H1 (cell line): ENCODE measurements at regions of chr12 and their contacts with region 1.

Region 1: GRCh38 chr12:123232807-123233543 is at the starts of genes MPHOSPH9 and MTRFR:
- DNase-seq: peak; percentile 96 to 98
- H3K4me3 ChIP-seq: peak within 1 kb of the TSS; percentile 59 to 94 (median 89)
- H3K27ac ChIP-seq: peak within 1 kb of the TSS; percentile 47
- H3K4me1 ChIP-seq: peaks cover 0 to 4% (median 2%) of the 10 kb centered on the region in 4 experiments; a peak in 3 of 7 replicates
- H3K27me3 ChIP-seq: no peaks in the 10 kb centered on the region
- CTCF ChIP-seq: no peak
- EP300 ChIP-seq: no peak
- POLR2A ChIP-seq: peak; percentile 84 to 94
- RAD21 ChIP-seq: no peak
- total RNA-seq, gene MPHOSPH9: 47.7 and 48.8 TPM in 2 replicates
- total RNA-seq, gene MTRFR: 12.0 and 12.9 TPM in 2 replicates

Region 2: GRCh38 chr12:122974274-122974891 is 258.6 kb before region 1 on chr12:
- CTCF ChIA-PET with region 1: interaction called, 8 read pairs
- POLR2A ChIA-PET with region 1: interaction called, 21 read pairs
- DNase-seq: peak; percentile 93 to 97
- H3K4me3 ChIP-seq: peak overlapping the region; percentile 85 to 96 (median 89)
- H3K27ac ChIP-seq: peak overlapping the region; percentile 72
- H3K4me1 ChIP-seq: peaks cover 0 to 8% (median 6%) of the 10 kb centered on the region in 4 experiments; a peak in 6 of 7 replicates
- H3K27me3 ChIP-seq: no peaks in the 10 kb centered on the region
- CTCF ChIP-seq: no peak
- EP300 ChIP-seq: no peak
- POLR2A ChIP-seq: peak in 1 of 2 experiments; percentile 42; a peak in 1 of 3 replicates
- RAD21 ChIP-seq: no peak

Region 3: DNA sequence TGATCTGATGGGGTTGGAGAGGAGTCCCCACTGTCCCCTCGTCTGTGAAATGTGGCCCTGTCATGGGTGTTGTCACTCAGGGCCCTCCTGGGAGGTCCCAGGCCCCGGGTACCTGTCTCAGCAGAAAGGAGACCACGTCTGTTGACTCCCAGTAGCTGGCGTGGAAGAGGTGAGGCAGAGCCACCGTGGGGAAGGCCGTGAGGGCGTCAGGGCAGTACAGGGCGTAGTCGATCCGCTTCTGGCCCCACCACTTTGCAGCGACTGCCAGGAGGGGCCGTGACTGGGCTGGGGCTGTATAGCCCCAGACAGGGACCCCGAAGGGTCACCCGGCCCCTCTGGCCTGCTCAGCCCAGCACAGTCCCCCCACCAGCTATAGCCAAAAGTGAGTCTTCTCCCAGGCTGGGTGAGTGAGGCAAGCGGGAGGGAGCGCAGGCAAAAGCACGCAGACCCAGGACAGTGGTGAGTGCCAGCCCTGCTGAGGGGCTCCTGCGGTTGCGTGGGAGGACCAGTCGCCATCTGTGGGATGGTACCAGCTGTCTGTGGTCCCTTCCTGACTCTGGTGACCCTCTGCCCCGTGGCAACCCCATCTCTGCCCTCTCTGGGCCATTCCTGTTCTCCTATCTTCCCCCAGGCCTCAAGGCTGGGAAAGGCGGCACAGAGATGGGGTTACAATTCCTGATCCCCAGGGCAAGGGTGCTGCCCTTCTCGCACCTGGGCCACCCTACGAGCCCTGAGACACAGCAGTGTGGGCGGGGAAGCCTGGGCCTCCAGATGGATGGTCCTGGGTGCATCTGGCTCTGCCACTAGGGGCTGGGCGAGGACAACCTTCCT is 244.1 kb before region 1 on chr12:
- CTCF ChIA-PET with region 1: interaction called, 10 read pairs
- POLR2A ChIA-PET with region 1: interaction called, 7 read pairs
- DNase-seq: no peak
- H3K4me3 ChIP-seq: no peak overlapping the region
- H3K27ac ChIP-seq: no peak overlapping the region
- H3K4me1 ChIP-seq: no peaks in the 10 kb centered on the region; a peak in 5 of 7 replicates
- H3K27me3 ChIP-seq: no peaks in the 10 kb centered on the region
- CTCF ChIP-seq: peak in 2 of 3 experiments; percentile 21 to 36; a peak in 2 of 4 replicates
- EP300 ChIP-seq: no peak
- POLR2A ChIP-seq: no peak
- RAD21 ChIP-seq: peak; percentile 14 to 36; a peak in 3 of 4 replicates

Region 4: DNA sequence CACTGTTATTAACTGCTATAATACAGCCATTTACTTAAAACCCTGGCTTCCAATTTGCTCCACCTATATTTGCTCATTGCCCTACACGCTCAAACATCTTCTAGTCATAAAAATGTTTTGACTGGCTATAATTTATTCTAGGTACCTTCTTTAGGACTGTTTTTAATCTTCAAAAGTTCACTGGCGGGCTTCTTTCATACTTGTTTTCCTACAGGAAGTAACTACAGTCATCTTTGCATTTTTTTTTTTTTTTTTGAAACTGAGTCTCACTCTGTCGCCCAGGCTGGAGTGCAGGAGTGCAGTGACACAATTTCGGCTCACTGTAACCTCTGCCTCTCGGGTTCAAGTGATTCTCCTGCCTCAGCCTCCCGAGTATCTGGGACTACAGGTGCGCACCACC is 32.6 kb before region 1 on chr12:
- CTCF ChIA-PET with region 1: interaction called, 11 read pairs
- POLR2A ChIA-PET with region 1: interaction called, 3 read pairs
- DNase-seq: no peak
- H3K4me3 ChIP-seq: no peak overlapping the region
- H3K27ac ChIP-seq: no peak overlapping the region
- H3K4me1 ChIP-seq: no peaks in the 10 kb centered on the region
- H3K27me3 ChIP-seq: no peaks in the 10 kb centered on the region
- CTCF ChIP-seq: no peak
- EP300 ChIP-seq: no peak
- POLR2A ChIP-seq: no peak
- RAD21 ChIP-seq: no peak

Region 5: GRCh38 chr12:123258593-123258992 is 25.6 kb after region 1 on chr12:
- CTCF ChIA-PET with region 1: interaction called, 11 read pairs
- POLR2A ChIA-PET with region 1: interaction called, 5 read pairs
- DNase-seq: no peak
- H3K4me3 ChIP-seq: no peak overlapping the region
- H3K27ac ChIP-seq: no peak overlapping the region
- H3K4me1 ChIP-seq: peaks cover 0 to 7% (median 0%) of the 10 kb centered on the region in 4 experiments; a peak in 2 of 7 replicates
- H3K27me3 ChIP-seq: no peaks in the 10 kb centered on the region
- CTCF ChIP-seq: no peak
- EP300 ChIP-seq: no peak
- POLR2A ChIP-seq: no peak
- RAD21 ChIP-seq: no peak

Region 6: GRCh38 chr12:123468562-123469185 is 235.7 kb after region 1 on chr12:
- CTCF ChIA-PET with region 1: no interaction called
- POLR2A ChIA-PET with region 1: no interaction called
- DNase-seq: no peak
- H3K4me3 ChIP-seq: no peak overlapping the region
- H3K27ac ChIP-seq: no peak overlapping the region
- H3K4me1 ChIP-seq: no peaks in the 10 kb centered on the region
- H3K27me3 ChIP-seq: no peaks in the 10 kb centered on the region
- CTCF ChIP-seq: peak in 2 of 3 experiments; percentile 11 to 14; a peak in 1 of 4 replicates
- EP300 ChIP-seq: no peak
- POLR2A ChIP-seq: no peak
- RAD21 ChIP-seq: peak; percentile 16 to 28; a peak in 3 of 4 replicates